Left colon (tissue), 2 donors: ENCODE measurements at regions of chr3 and their contacts with region 1.

Region 1: DNA sequence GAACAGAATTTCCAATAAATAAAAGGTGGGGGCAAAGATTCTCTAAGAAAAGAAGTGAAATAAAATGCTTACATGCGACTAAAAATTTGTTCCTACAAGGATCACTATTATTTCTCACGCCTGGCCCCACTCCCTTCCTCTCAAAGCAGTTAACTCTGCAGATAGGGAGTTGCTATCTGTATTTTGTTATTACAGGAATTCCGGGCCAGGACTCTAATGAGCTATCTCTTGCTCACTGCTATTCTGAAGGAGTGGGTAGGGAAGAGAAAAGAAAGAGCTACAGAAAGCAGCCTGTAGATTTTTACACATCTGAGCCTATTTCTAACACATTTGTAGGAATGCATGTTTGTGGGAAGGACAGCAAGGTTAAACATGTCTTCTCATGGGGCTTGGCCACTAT is 140.4 kb downstream of the PCCB start:
- DNase-seq: no peak
- ATAC-seq: no peak

Region 2: DNA sequence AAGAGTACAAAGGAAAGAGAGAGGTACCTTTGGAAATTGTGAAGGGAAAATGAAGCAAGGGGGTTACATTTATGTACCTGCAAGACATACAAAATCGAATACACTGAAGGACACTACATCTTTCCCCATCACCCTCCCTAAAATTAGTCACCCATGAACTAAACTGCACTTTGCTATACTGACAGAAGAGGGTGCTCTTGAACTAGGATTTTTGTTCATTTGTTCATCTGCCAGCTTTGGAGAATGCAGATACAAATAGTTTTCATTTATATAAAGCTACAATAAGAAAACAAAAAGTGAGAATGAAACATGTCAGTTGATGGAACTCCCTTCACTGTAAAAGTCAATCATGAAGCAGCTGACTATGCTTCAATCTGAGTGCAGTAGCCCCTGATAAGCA is 84.7 kb before region 1 on chr3:
- intact Hi-C with region 1: no loop called
- DNase-seq: no peak
- ATAC-seq: peak; percentile 26

Region 3: GRCh38 chr3:136577792-136578191 is 187.2 kb after region 1 on chr3:
- intact Hi-C with region 1: no loop called
- DNase-seq: no peak
- ATAC-seq: peak; percentile 19

Region 4: DNA sequence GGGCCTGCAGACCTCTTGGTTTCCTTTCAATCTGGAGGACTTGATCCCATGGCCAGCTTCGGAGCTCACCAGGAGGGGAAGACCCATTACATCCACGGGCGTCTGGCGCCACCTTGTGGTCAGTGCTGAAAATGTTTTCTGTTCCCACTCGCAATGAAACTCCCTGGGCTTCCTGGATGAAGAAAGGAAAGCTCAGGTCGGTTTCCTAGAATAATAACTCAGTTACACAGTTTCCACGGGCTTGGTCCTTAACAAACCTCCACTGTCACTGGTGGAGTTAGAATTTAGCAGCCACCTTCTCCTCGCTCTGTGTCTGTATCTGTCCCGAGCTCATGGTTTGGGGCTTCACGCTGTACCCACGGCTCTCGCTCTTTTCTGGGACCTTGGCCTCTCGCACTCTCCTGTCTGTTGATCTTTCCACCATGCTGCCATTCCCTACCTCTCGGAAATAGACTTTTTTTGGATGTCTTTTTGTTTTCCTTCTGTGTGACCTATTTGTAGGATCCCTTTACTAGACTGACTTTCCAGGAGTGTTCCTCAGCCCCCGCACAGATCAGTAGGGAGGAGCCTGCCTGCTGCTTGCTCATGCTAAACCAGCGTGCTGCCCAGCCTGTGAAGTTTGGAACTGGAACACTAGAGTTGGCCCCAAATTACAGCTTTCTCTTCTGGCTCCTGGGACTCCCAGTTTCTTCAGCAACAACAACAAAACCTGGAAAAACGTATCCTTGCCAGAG is 623.5 kb after region 1 on chr3:
- intact Hi-C with region 1: loop called in 1 of 2 experiments (anchors 5 kb)
- DNase-seq: peak; percentile 83 to 90
- ATAC-seq: peak; percentile 98